ENCODE measurements at regions of chr12 and their contacts with region 1.

Region 1: GRCh38 chr12:50132505-50133135 is 20.6 kb downstream of the COX14 start:
- DNase-seq: peak in 4 of 5 donors; percentile 48 to 54 (median 52)
- H3K4me3 ChIP-seq: no peak overlapping the region
- H3K4me3 Mint-ChIP-seq: no peak overlapping the region
- H3K27ac ChIP-seq: no peak overlapping the region
- H3K27ac Mint-ChIP-seq: peak overlapping the region in 6 of 7 donors; percentile 14 to 84 (median 68)
- H3K4me1 ChIP-seq: no peaks in the 10 kb centered on the region
- H3K4me1 Mint-ChIP-seq: peaks cover 12 to 28% (median 13%) of the 10 kb centered on the region in 4 donors
- H3K27me3 ChIP-seq: no peaks in the 10 kb centered on the region
- H3K27me3 Mint-ChIP-seq: no peaks in the 10 kb centered on the region

Region 2: GRCh38 chr12:50062728-50063460 is 69.7 kb before region 1 on chr12:
- CTCF ChIA-PET with region 1: no interaction called
- POLR2A ChIA-PET with region 1: no interaction called
- intact Hi-C with region 1: no loop called
- DNase-seq: no peak
- H3K4me3 ChIP-seq: no peak overlapping the region
- H3K4me3 Mint-ChIP-seq: no peak overlapping the region
- H3K27ac ChIP-seq: no peak overlapping the region
- H3K27ac Mint-ChIP-seq: no peak overlapping the region
- H3K4me1 ChIP-seq: peaks cover 6% of the 10 kb centered on the region
- H3K4me1 Mint-ChIP-seq: peaks cover 4 to 18% (median 10%) of the 10 kb centered on the region in 4 donors
- H3K27me3 ChIP-seq: peaks cover 6% of the 10 kb centered on the region
- H3K27me3 Mint-ChIP-seq: peaks cover 27 to 32% of the 10 kb centered on the region in 2 donors

Region 3: DNA sequence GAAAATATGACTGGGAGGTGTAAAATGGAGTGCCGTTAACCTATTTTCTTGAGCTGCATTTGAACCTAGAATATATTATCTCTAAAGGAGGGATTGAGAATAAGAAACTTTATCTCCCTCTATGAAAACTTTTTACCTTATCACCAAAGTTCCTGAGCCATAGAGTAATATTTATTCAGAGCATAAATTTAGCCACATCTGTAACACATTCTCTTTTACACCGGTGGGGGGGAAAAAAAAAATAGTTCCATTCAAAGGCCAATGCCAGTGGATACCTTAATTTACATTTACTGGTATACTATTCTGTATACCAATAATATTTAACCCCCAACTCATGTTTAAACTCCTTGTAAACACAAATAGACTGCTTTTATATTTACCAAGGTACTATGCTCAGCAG is 12.8 kb after region 1 on chr12:
- CTCF ChIA-PET with region 1: interaction called, 10 read pairs
- POLR2A ChIA-PET with region 1: no interaction called
- intact Hi-C with region 1: no loop called
- DNase-seq: no peak
- H3K4me3 ChIP-seq: no peak overlapping the region
- H3K4me3 Mint-ChIP-seq: no peak overlapping the region
- H3K27ac ChIP-seq: no peak overlapping the region
- H3K27ac Mint-ChIP-seq: no peak overlapping the region
- H3K4me1 ChIP-seq: peaks cover 6% of the 10 kb centered on the region
- H3K4me1 Mint-ChIP-seq: peaks cover 12 to 18% (median 15%) of the 10 kb centered on the region in 4 donors
- H3K27me3 ChIP-seq: no peaks in the 10 kb centered on the region
- H3K27me3 Mint-ChIP-seq: no peaks in the 10 kb centered on the region

Region 4: DNA sequence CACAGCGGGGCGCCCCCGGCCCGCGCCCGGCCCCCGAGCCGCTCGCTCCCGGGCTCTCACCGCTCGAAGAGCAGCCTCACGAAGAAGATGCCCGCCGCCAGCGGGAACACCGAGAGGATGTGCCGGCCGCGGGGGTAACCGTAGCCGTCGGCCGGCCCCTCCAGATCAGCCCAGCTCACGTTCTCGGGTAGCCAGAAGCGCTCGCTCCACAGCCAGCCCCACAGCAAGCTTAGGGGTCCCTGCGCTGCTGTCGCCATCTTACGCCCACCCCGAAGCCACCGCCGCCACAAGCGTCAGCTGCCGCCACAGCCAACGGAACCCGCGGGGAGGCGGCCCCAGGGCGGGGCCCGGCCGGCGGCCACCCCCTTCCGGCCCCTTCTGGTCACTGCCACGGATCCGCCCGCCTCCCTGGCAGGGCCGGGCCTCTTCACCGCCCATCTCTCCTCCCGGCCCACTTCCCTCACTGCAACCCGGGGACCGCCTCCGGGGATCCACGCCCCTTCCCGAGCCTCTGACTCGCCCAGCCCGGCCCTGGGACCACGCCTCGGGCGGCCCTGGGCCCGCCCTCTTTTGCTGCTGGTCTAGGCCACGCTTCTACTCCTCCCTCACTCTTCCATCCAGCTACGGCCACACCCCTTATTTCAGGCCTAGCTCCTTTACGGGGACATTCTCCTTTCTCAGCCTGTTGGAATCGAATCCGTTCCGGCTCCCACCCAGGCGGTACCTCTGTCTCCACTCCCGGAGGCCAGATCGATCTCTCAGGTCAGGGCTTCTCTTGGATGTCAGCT is 34.6 kb after region 1 on chr12 and contains the start of gene CERS5:
- CTCF ChIA-PET with region 1: interaction called, 17 read pairs
- POLR2A ChIA-PET with region 1: interaction called, 6 read pairs
- intact Hi-C with region 1: no loop called
- DNase-seq: peak; percentile 97 to 98 (median 97)
- H3K4me3 ChIP-seq: peak within 1 kb of the TSS; percentile 72 to 81
- H3K4me3 Mint-ChIP-seq: peak within 1 kb of the TSS; percentile 93 to 96 (median 94)
- H3K27ac ChIP-seq: peak within 1 kb of the TSS; percentile 90
- H3K27ac Mint-ChIP-seq: peak within 1 kb of the TSS; percentile 88 to 98 (median 96)
- H3K4me1 ChIP-seq: peaks cover 30% of the 10 kb centered on the region
- H3K4me1 Mint-ChIP-seq: peaks cover 19 to 34% (median 26%) of the 10 kb centered on the region in 4 donors
- H3K27me3 ChIP-seq: no peaks in the 10 kb centered on the region
- H3K27me3 Mint-ChIP-seq: no peaks in the 10 kb centered on the region
- total RNA-seq, gene CERS5: 42.1 to 48.2 TPM

Region 5: DNA sequence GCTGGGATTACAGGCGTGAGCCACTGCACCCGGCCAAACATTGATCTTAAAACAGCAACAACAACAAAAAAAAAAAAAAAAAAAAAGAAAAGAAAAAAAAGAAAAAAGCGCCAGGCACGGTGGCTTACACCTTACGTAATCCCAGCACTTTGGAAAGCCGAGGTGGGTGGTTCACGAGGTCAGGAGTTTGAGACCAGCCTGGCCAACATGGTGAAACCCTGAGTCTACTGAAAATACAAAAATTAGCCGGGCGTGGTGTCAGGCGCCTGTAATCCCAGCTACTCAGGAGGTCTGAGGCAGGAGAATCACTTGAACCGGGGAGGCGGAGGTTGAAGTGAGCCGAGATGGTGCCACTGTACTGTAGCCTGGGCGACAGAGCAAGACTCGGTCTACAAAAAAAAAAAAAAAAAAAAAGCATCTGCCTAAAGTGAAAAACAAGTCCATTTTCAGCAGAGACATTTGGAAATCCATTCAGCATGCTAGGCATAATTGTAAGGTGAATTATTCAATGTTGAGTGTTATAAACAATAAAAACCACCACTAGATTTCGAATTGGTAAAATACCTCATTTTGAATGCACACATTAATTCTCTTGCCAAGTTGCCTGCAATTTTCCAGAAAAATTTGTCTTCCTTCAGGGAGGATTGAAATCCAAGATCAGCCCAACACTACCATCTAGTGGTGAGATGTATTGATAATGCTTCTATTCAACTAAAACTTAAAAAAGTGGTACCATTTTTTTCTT is 42.5 kb after region 1 on chr12:
- CTCF ChIA-PET with region 1: interaction called, 41 read pairs
- POLR2A ChIA-PET with region 1: interaction called, 3 read pairs
- intact Hi-C with region 1: loop called (anchors 1 kb)
- DNase-seq: peak; percentile 44 to 71 (median 64)
- H3K4me3 ChIP-seq: no peak overlapping the region
- H3K4me3 Mint-ChIP-seq: no peak overlapping the region
- H3K27ac ChIP-seq: no peak overlapping the region
- H3K27ac Mint-ChIP-seq: peak overlapping the region in 2 of 7 donors; percentile 13 to 49
- H3K4me1 ChIP-seq: no peaks in the 10 kb centered on the region
- H3K4me1 Mint-ChIP-seq: peaks cover 0 to 2% (median 0%) of the 10 kb centered on the region in 4 donors
- H3K27me3 ChIP-seq: no peaks in the 10 kb centered on the region
- H3K27me3 Mint-ChIP-seq: no peaks in the 10 kb centered on the region

Region 6: DNA sequence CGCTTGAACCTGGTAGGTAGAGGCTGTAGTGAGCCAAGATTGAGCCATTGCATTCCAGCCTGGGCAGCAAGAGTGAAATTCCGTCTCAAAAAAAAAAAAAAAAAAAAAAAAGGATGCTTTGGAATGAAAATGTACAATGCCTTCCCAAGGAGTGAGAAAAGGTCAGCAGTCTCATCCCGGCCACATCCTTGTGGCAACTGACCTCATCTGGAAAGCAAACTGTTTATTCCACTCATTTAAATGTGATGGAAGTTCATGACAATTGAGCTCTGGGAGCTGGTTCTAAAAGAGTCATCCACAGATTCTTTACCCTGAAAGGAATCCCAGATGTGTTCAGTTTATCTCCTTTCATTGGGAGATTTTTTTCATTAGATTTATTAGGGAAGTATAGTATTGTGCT is 170.1 kb after region 1 on chr12:
- CTCF ChIA-PET with region 1: no interaction called
- POLR2A ChIA-PET with region 1: no interaction called
- intact Hi-C with region 1: no loop called
- DNase-seq: no peak
- H3K4me3 ChIP-seq: no peak overlapping the region
- H3K4me3 Mint-ChIP-seq: no peak overlapping the region
- H3K27ac ChIP-seq: no peak overlapping the region
- H3K27ac Mint-ChIP-seq: no peak overlapping the region
- H3K4me1 ChIP-seq: no peaks in the 10 kb centered on the region
- H3K4me1 Mint-ChIP-seq: no peaks in the 10 kb centered on the region
- H3K27me3 ChIP-seq: no peaks in the 10 kb centered on the region
- H3K27me3 Mint-ChIP-seq: no peaks in the 10 kb centered on the region

Region 7: GRCh38 chr12:50314629-50315312 is 182.2 kb after region 1 on chr12:
- CTCF ChIA-PET with region 1: interaction called, 3 read pairs
- POLR2A ChIA-PET with region 1: no interaction called
- intact Hi-C with region 1: loop called (anchors 2 kb)
- DNase-seq: peak in 1 of 5 donors; percentile 2
- H3K4me3 ChIP-seq: no peak overlapping the region
- H3K4me3 Mint-ChIP-seq: no peak overlapping the region
- H3K27ac ChIP-seq: no peak overlapping the region
- H3K27ac Mint-ChIP-seq: peak overlapping the region in 1 of 7 donors; percentile 52
- H3K4me1 ChIP-seq: no peaks in the 10 kb centered on the region
- H3K4me1 Mint-ChIP-seq: no peaks in the 10 kb centered on the region
- H3K27me3 ChIP-seq: no peaks in the 10 kb centered on the region
- H3K27me3 Mint-ChIP-seq: no peaks in the 10 kb centered on the region

Measured in CD4-positive, alpha-beta memory T cell (primary cell).